Activated B cell treated with CpG ODN at 0.5 μM for 24 hours (primary cell): ENCODE measurements at regions of chr5 and their contacts with region 1.

Region 1: GRCh38 chr5:149828161-149828884 is 98.2 kb downstream of the PPARGC1B start:
- DNase-seq: peak; percentile 70
- ATAC-seq: peak; percentile 47
- H3K4me3 Mint-ChIP-seq: no peak overlapping the region
- H3K27ac Mint-ChIP-seq: no peak overlapping the region
- H3K4me1 Mint-ChIP-seq: peaks cover 9% of the 10 kb centered on the region
- H3K27me3 Mint-ChIP-seq: no peaks in the 10 kb centered on the region
- CTCF ChIP-seq: no peak

Region 2: DNA sequence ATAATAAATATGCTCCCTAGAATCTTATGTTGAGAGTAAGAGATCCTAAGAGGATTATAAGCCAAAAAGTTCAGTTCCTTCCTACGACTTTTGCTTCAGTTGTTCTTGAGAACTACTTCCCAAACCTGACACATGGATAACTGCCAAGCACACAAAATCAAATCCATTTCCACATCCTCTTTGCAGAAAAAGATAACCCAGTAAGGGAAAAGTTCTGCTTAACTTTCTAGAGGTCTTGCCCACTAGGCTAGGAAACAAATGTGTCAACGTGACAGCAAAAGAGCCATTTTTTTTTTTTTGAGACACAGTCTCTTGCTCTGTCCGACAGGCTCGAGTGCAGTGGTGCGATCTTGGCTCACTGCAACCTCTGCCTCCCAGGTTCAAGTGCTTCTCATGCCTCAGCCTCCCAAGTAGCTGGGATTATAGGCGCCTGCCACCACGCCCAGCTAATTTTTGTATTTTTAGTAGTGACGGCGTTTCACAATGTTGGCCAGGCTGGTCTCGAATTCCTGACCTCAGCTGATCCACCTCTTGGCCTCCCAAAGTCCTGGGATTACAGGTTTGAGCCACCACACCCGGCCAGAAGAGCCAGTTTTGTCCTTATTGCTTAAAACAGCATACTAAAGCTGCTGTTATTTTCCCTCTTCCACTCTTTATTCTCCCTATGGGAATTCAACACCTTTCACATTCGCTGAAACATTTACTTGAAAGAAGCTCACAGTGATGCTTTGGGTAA is 301.3 kb before region 1 on chr5:
- CTCF ChIA-PET with region 1: no interaction called
- POLR2A ChIA-PET with region 1: no interaction called
- intact Hi-C with region 1: no loop called
- DNase-seq: no peak
- ATAC-seq: no peak
- H3K4me3 Mint-ChIP-seq: no peak overlapping the region
- H3K27ac Mint-ChIP-seq: no peak overlapping the region
- H3K4me1 Mint-ChIP-seq: peaks cover 61% of the 10 kb centered on the region
- H3K27me3 Mint-ChIP-seq: no peaks in the 10 kb centered on the region
- CTCF ChIP-seq: no peak

Region 3: GRCh38 chr5:149636851-149637246 is 191.5 kb before region 1 on chr5:
- CTCF ChIA-PET with region 1: interaction called, 162 read pairs
- POLR2A ChIA-PET with region 1: interaction called, 4 read pairs
- intact Hi-C with region 1: loop called (anchors 1 kb)
- DNase-seq: peak; percentile 55
- ATAC-seq: peak; percentile 70
- H3K4me3 Mint-ChIP-seq: no peak overlapping the region
- H3K27ac Mint-ChIP-seq: no peak overlapping the region
- H3K4me1 Mint-ChIP-seq: peaks cover 5% of the 10 kb centered on the region
- H3K27me3 Mint-ChIP-seq: no peaks in the 10 kb centered on the region
- CTCF ChIP-seq: peak; percentile 94

Region 4: GRCh38 chr5:149667084-149667828 is 161.1 kb before region 1 on chr5:
- CTCF ChIA-PET with region 1: interaction called, 91 read pairs
- POLR2A ChIA-PET with region 1: no interaction called
- intact Hi-C with region 1: loop called (anchors 1 kb)
- DNase-seq: no peak
- ATAC-seq: peak; percentile 50
- H3K4me3 Mint-ChIP-seq: no peak overlapping the region
- H3K27ac Mint-ChIP-seq: no peak overlapping the region
- H3K4me1 Mint-ChIP-seq: peaks cover 5% of the 10 kb centered on the region
- H3K27me3 Mint-ChIP-seq: no peaks in the 10 kb centered on the region
- CTCF ChIP-seq: peak; percentile 94

Region 5: DNA sequence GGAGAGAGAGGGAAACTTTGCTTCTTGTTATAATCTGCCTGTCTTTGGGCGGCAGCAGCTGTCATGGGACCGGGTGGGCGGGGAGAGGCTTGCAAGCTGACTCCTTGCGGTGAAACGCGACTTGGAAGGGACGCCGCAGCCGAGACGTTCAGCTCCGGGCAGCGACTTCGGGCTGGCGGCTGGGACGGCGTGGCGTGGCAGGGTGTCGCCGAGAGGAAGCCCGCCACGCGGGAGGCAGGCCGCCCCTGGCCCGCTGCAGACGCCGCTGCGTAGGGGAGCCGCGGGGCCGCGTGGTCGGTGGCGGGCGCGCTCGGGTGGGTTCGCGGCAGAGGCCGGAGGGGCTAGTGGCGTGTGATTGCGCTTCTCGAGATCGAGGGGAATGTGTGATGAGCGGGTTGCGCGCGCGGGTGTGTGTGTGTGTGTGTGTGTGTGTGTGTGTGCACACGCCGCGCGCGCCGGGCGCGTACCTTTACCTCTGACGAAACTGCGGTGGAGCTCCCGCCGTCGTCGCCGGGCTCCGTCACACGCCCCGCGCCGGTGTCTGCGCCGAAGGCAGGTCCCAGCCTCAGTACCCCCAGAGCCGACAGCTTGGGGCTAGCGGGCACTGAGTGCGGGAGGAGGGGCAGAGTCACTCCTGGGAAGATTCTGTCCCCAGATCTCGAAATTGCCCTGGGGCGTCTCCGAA is 96.5 kb before region 1 on chr5:
- CTCF ChIA-PET with region 1: interaction called, 3 read pairs
- POLR2A ChIA-PET with region 1: no interaction called
- intact Hi-C with region 1: loop called (anchors 2 kb)
- DNase-seq: peak; percentile 50
- ATAC-seq: peak; percentile 58
- H3K4me3 Mint-ChIP-seq: peak overlapping the region; percentile 88
- H3K27ac Mint-ChIP-seq: peak overlapping the region; percentile 75
- H3K4me1 Mint-ChIP-seq: peaks cover 12% of the 10 kb centered on the region
- H3K27me3 Mint-ChIP-seq: no peaks in the 10 kb centered on the region
- CTCF ChIP-seq: no peak

Region 6: DNA sequence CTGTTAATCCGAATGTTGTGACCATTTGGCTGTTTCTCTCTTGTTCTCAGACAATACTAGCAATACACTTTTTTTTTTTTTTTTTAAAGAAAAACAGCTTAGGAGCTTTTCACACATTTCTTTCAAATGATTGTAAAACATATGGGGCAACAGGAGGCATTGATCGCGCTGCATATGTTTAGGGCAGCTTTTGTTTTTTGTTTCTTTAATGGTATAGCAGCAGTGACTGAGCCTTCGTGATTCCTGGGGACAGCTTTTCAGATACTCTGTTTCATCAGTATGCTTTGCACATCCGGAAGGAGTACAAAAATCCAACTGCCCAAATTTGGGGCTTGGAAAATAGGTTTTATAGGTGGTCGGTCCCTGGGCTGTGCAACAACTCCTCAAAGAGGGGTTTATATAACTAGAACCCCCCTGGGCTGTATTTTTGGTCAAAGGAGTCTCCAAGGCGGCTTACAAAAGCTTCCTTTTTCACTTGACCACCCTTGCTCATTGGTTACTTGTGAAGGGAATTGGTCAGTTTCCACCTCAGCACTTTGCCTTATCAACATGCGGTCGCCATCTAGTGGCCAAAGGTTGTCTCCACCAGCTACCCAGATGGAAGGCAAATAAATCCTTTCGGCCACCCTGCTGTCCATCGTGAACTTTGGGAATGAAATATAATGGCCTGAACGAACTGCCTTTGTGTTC is 24.5 kb after region 1 on chr5:
- CTCF ChIA-PET with region 1: interaction called, 121 read pairs
- POLR2A ChIA-PET with region 1: no interaction called
- intact Hi-C with region 1: no loop called
- DNase-seq: peak; percentile 29
- ATAC-seq: peak; percentile 25
- H3K4me3 Mint-ChIP-seq: no peak overlapping the region
- H3K27ac Mint-ChIP-seq: no peak overlapping the region
- H3K4me1 Mint-ChIP-seq: no peaks in the 10 kb centered on the region
- H3K27me3 Mint-ChIP-seq: no peaks in the 10 kb centered on the region
- CTCF ChIP-seq: peak; percentile 20

Region 7: GRCh38 chr5:149887622-149888183 is 59.4 kb after region 1 on chr5:
- CTCF ChIA-PET with region 1: no interaction called
- POLR2A ChIA-PET with region 1: no interaction called
- intact Hi-C with region 1: no loop called
- DNase-seq: no peak
- ATAC-seq: no peak
- H3K4me3 Mint-ChIP-seq: no peak overlapping the region
- H3K27ac Mint-ChIP-seq: no peak overlapping the region
- H3K4me1 Mint-ChIP-seq: no peaks in the 10 kb centered on the region
- H3K27me3 Mint-ChIP-seq: peaks cover 7% of the 10 kb centered on the region
- CTCF ChIP-seq: no peak